GM12878 (cell line): ENCODE measurements at regions of chr2 and their contacts with region 1.

Region 1: DNA sequence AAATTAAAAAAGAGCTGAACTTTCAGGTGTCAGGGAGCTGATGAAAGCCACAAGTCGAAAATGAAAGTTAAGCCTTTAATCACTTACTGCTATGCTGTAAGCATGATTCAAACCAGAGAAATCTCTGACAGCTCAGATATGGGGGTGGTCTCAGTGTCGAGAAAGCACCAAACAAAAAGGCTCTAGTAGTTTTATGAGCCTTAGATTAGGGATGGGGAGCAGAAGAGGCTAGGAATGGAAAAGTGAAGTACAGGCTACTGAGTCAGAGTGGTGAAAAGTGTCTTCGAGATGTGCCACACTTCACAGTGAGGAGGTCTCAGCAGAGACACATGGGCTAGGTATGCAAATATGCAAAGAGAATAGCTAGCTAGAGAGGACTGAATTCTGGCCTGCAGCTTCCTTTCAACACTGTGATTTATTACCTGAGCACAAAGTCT is 482.2 kb downstream of the SPAG16 start:
- DNase-seq: peak; percentile 60
- ATAC-seq: peak; percentile 98
- H3K4me3 ChIP-seq: peak overlapping the region; percentile 33; the same call in 1 of the 2 replicates
- H3K27ac ChIP-seq: peak overlapping the region; percentile 75
- H3K4me1 ChIP-seq: peaks cover 14% of the 10 kb centered on the region
- H3K27me3 ChIP-seq: no peaks in the 10 kb centered on the region
- CTCF ChIP-seq: no peak
- EP300 ChIP-seq: no peak
- POLR2A ChIP-seq: no peak
- RAD21 ChIP-seq: no peak

Region 2: GRCh38 chr2:213787869-213788268 is 21.4 kb after region 1 on chr2:
- CTCF ChIA-PET with region 1: no interaction called
- POLR2A ChIA-PET with region 1: no interaction called
- RAD21 ChIA-PET with region 1: interaction called, 4 read pairs
- SMC1A ChIA-PET with region 1: interaction called, 14 read pairs
- in situ Hi-C with region 1: no loop called
- intact Hi-C with region 1: no loop called
- DNase-seq: no peak
- ATAC-seq: peak; percentile 79
- H3K4me3 ChIP-seq: no peak overlapping the region
- H3K27ac ChIP-seq: no peak overlapping the region
- H3K4me1 ChIP-seq: no peaks in the 10 kb centered on the region
- H3K27me3 ChIP-seq: no peaks in the 10 kb centered on the region
- CTCF ChIP-seq: no peak
- EP300 ChIP-seq: peak; percentile 22 to 55; a peak in 2 of 4 replicates
- POLR2A ChIP-seq: no peak
- RAD21 ChIP-seq: no peak